ENCODE measurements at regions of chr11 and their contacts with region 1.

Region 1: GRCh38 chr11:122202951-122203456 is 87.0 kb upstream of the BLID start:
- DNase-seq: peak; percentile 79 to 91 (median 83)
- H3K4me3 ChIP-seq: peak overlapping the region; percentile 45
- H3K27ac ChIP-seq: peak overlapping the region in 1 of 2 donors; percentile 40
- H3K4me1 ChIP-seq: peaks cover 17% of the 10 kb centered on the region
- H3K27me3 ChIP-seq: no peaks in the 10 kb centered on the region
- CTCF ChIP-seq: peak; percentile 86 to 96 (median 95)
- EP300 ChIP-seq: no peak
- POLR2A ChIP-seq: no peak

Region 2: GRCh38 chr11:121655537-121656327 is 547.3 kb before region 1 on chr11:
- intact Hi-C with region 1: loop called (anchors 2 to 5 kb)
- DNase-seq: peak; percentile 91 to 96 (median 92)
- H3K4me3 ChIP-seq: peak overlapping the region; percentile 33
- H3K27ac ChIP-seq: peak overlapping the region; percentile 90 to 91
- H3K4me1 ChIP-seq: peaks cover 11% of the 10 kb centered on the region
- H3K27me3 ChIP-seq: no peaks in the 10 kb centered on the region
- CTCF ChIP-seq: peak; percentile 92 to 95 (median 95)
- EP300 ChIP-seq: peak; percentile 52
- POLR2A ChIP-seq: peak; percentile 10

Region 3: DNA sequence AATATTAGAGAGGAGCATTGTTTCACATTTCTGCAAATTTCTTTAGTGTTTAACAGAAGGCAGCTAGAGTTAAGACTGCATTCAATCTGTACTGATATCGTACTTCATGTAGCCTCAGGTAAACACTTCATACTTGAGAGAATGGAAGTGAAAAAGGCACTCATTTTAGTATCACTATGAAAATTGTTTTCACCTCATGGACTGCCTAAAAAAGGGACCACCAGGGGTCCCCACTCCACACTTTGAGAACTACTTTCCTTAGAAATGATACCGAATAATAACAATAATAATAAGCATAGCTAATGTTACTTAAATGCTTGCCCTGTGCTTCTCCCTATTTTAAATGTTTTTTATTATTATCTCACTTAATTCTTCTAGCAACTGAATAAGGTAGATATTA is 182.1 kb before region 1 on chr11:
- intact Hi-C with region 1: loop called in 1 of 4 experiments (anchors 10 kb)
- DNase-seq: peak in 1 of 5 donors; percentile 29
- H3K4me3 ChIP-seq: no peak overlapping the region
- H3K27ac ChIP-seq: no peak overlapping the region
- H3K4me1 ChIP-seq: no peaks in the 10 kb centered on the region
- H3K27me3 ChIP-seq: no peaks in the 10 kb centered on the region
- CTCF ChIP-seq: peak in 1 of 3 donors; percentile 11
- EP300 ChIP-seq: no peak
- POLR2A ChIP-seq: no peak

Region 4: GRCh38 chr11:122093731-122094275 is 109.2 kb before region 1 on chr11:
- intact Hi-C with region 1: no loop called
- DNase-seq: peak in 1 of 5 donors; percentile 16
- H3K4me3 ChIP-seq: no peak overlapping the region
- H3K27ac ChIP-seq: no peak overlapping the region
- H3K4me1 ChIP-seq: peaks cover 3% of the 10 kb centered on the region
- H3K27me3 ChIP-seq: no peaks in the 10 kb centered on the region
- CTCF ChIP-seq: no peak
- EP300 ChIP-seq: no peak
- POLR2A ChIP-seq: no peak

Region 5: GRCh38 chr11:122159173-122159721 is 43.8 kb before region 1 on chr11:
- intact Hi-C with region 1: loop called in 3 of 4 experiments (anchors 5 to 10 kb)
- DNase-seq: peak; percentile 43 to 56 (median 52)
- H3K4me3 ChIP-seq: peak overlapping the region; percentile 3
- H3K27ac ChIP-seq: peak overlapping the region; percentile 66 to 87
- H3K4me1 ChIP-seq: peaks cover 16% of the 10 kb centered on the region
- H3K27me3 ChIP-seq: no peaks in the 10 kb centered on the region
- CTCF ChIP-seq: no peak
- EP300 ChIP-seq: no peak
- POLR2A ChIP-seq: no peak

Region 6: DNA sequence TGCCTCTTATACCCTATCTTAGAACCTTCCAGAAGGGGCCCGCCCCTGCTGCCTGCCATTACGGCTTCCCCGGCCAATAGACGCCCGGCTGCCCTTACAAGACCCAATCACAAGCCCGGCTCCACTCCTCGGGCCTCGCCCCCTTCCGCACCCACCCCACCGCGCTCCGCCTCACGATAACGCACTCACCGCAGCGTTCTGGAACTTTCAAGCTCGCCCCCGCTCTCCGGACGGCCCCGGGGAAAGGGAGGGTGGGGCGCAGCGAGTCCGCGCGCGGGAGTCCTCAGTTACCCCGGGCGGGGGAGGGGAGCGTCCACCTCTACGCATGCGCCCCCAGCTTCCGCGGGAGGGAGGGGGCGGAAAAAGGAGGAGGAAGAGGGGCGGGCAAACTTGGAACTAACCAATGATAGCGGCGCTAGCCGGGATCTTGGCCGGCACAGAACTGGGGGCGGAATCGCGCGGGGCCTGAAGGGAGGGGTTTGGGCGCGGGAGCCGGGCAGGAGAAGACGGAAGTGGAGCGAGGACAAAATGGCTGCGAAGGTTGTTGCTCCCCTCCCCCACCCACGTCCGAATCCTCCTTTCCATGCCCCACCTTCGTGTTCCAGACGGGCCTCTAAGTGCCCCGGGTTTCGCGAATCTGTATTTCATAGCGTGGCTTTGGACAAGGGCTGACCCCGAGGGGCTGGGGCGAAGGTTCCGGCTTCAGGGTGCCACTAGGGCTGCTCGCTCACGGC is 859.3 kb after region 1 on chr11:
- intact Hi-C with region 1: loop called in 1 of 4 experiments (anchors 10 kb)
- DNase-seq: peak; percentile 98 to 99 (median 99)
- H3K4me3 ChIP-seq: peak overlapping the region; percentile 89
- H3K27ac ChIP-seq: peak overlapping the region; percentile 95 to 96
- H3K4me1 ChIP-seq: peaks cover 8% of the 10 kb centered on the region
- H3K27me3 ChIP-seq: no peaks in the 10 kb centered on the region
- CTCF ChIP-seq: no peak
- EP300 ChIP-seq: no peak
- POLR2A ChIP-seq: peak; percentile 93

Measured in ovary (tissue), 10 donors.